ENCODE measurements at regions of chr7 and their contacts with region 1.

Region 1: GRCh38 chr7:26381476-26382353 is 90.1 kb downstream of the SNX10 start:
- DNase-seq: no peak

Region 2: DNA sequence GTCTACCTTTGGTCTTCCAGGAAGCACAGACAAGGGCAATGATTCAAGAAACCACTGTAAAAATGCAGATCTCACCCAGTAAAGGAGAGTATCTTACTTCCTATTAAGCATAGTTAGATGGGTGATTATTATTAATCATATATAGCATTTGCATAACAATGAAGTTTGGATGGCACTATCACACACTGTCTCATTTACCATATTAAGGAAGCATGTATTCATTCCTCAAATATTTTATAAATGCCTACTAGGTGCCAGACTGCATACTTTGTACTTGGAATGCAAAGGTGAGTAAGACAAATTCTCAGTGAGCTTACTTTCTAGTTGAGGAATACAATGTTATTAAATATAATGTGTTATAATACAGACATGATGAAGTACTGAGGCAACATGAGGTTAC is 536.5 kb after region 1 on chr7:
- intact Hi-C with region 1: loop called in 1 of 2 experiments (anchors 5 kb)
- DNase-seq: no peak

Measured in posterior vena cava (tissue), 2 donors.